A549 (cell line): ENCODE measurements at regions of chr15 and their contacts with region 1.

Region 1: GRCh38 chr15:62389885-62390790 is 225.1 kb upstream of the C2CD4B start:
- DNase-seq: peak; percentile 79 to 82
- ATAC-seq: peak; percentile 79 to 83
- H3K4me3 ChIP-seq: peak within 1 kb of the TSS; percentile 88
- H3K27ac ChIP-seq: peak within 1 kb of the TSS; percentile 92 to 95
- H3K4me1 ChIP-seq: peaks cover 14% of the 10 kb centered on the region
- CTCF ChIP-seq: no peak
- EP300 ChIP-seq: no peak
- POLR2A ChIP-seq: peak; percentile 97
- RAD21 ChIP-seq: peak in 1 of 2 experiments; percentile 11; a peak in 3 of 5 replicates

Region 2: DNA sequence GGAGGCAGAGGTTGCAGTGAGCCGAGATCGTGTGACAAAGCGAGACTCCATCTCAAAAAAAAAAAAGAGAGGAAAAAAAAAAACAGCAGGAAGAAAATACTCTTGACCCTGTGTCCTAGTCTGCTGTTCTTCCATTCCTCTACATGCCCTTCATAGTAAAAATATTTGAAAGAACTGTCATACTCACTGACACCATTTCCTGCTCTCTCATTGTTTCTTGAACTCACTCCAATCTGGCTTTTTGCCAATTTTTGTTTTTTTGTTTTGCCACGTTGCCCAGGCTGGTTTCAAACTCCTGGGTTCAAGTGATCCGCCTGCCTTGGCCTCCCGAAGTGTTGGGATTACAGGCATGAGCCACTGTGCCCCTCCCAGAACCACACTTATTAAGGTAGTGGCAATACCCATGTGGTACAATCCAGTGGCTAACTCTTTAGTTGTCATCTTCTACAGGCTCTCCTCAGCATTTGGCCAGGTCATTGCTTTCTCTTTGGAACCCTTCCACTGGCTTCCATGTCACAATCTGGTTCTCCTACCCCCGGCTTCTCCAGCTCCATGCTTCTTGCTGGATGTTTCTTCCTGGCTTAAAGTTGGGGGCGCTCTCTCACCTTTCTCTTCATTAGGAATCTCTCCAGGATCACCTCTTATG is 13.1 kb after region 1 on chr15:
- CTCF ChIA-PET with region 1: interaction called, 13 read pairs
- POLR2A ChIA-PET with region 1: no interaction called
- DNase-seq: peak in 1 of 2 experiments; percentile 15
- ATAC-seq: peak in 1 of 2 experiments; percentile 63; a peak in 2 of 6 replicates
- H3K4me3 ChIP-seq: no peak overlapping the region
- H3K27ac ChIP-seq: no peak overlapping the region
- H3K4me1 ChIP-seq: peaks cover 12% of the 10 kb centered on the region
- CTCF ChIP-seq: no peak
- EP300 ChIP-seq: no peak
- POLR2A ChIP-seq: no peak
- RAD21 ChIP-seq: no peak